ENCODE measurements at regions of chr10 and their contacts with region 1.

Region 1: DNA sequence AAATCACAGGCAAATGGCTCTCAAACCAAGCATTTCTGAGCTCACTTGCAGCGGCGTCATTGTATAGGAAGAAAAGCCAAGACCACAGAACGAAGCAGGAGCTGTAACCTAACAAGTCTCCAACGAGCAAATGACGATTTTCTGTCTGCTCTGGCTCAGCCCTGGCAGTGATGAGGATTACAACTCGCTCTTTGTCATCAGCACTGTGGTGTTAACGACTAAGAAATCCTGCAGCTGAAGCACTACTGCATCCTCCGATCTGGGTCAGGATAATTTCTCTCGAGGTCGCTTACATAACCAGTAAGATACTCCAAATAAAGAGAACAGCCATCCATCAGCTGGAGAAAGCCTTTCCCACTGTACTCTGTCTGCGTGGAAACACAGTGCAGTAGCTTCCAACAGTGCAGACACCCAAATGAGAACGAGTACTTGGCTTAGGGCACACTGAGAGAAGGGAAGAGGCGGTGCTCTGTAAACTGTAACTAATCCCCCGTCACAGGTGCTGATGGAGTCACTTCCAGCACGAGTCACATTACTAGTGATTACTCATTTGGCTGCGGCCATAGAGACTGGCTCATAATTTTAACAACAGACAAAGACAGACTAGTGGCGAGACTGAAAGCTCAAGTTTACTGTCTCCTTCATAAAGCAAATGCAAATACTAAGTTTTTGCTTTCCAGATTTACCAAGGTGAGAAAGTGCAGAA is 135.8 kb downstream of the NRBF2 start:
- DNase-seq: peak; percentile 86
- H3K4me3 Mint-ChIP-seq: peak overlapping the region; percentile 93
- H3K27ac Mint-ChIP-seq: peak overlapping the region; percentile 99
- H3K4me1 Mint-ChIP-seq: peaks cover 21% of the 10 kb centered on the region
- H3K27me3 Mint-ChIP-seq: no peaks in the 10 kb centered on the region

Region 2: GRCh38 chr10:63120554-63120953 is 148.4 kb before region 1 on chr10:
- CTCF ChIA-PET with region 1: no interaction called
- POLR2A ChIA-PET with region 1: no interaction called
- DNase-seq: no peak
- H3K4me3 Mint-ChIP-seq: no peak overlapping the region
- H3K27ac Mint-ChIP-seq: no peak overlapping the region
- H3K4me1 Mint-ChIP-seq: no peaks in the 10 kb centered on the region
- H3K27me3 Mint-ChIP-seq: peaks cover 3% of the 10 kb centered on the region

Region 3: GRCh38 chr10:63173468-63174232 is 95.3 kb before region 1 on chr10:
- CTCF ChIA-PET with region 1: no interaction called
- POLR2A ChIA-PET with region 1: interaction called, 12 read pairs
- DNase-seq: no peak
- H3K4me3 Mint-ChIP-seq: peak overlapping the region; percentile 5
- H3K27ac Mint-ChIP-seq: peak overlapping the region; percentile 86
- H3K4me1 Mint-ChIP-seq: peaks cover 63% of the 10 kb centered on the region
- H3K27me3 Mint-ChIP-seq: no peaks in the 10 kb centered on the region

Region 4: DNA sequence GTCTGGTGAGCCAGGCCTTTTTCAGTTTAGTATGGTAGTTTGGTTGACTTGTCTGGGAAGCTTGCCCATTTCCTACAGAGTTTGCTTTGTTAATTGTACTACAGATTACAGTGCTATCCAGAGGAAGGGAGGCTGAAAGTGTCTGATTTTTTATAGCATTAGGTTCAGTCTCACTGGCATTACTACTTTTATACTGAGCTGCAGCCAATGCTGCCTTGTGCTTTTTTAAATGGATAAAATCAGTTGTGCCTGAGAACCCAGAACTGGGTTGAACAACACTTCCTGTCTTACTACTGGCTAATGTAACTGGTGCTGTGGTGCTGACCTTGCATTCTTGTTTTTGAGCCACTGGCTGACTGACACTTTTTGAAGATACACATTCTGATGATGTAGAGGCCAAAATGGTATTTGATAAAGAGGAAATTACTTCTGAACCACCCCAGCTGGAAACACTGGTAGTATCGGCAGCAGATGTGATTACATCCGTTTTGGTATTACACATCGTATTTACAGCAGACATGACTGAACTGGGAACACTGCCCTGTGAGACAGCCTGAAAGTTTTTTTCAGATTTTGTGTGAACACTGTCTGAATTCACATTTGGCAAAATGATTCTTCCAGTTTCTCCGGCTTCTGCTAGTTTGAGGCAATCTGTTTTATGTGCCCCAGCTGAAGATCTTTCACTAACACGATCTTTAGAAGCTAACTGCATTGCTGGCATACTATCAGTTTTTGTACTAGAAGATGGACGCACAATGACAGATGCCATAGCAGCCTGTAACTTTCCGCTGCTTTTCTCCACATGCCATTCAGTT is 61.7 kb before region 1 on chr10:
- CTCF ChIA-PET with region 1: interaction called, 3 read pairs
- POLR2A ChIA-PET with region 1: interaction called, 24 read pairs
- DNase-seq: peak; percentile 42
- H3K4me3 Mint-ChIP-seq: no peak overlapping the region
- H3K27ac Mint-ChIP-seq: peak overlapping the region; percentile 82
- H3K4me1 Mint-ChIP-seq: peaks cover 64% of the 10 kb centered on the region
- H3K27me3 Mint-ChIP-seq: no peaks in the 10 kb centered on the region

Region 5: DNA sequence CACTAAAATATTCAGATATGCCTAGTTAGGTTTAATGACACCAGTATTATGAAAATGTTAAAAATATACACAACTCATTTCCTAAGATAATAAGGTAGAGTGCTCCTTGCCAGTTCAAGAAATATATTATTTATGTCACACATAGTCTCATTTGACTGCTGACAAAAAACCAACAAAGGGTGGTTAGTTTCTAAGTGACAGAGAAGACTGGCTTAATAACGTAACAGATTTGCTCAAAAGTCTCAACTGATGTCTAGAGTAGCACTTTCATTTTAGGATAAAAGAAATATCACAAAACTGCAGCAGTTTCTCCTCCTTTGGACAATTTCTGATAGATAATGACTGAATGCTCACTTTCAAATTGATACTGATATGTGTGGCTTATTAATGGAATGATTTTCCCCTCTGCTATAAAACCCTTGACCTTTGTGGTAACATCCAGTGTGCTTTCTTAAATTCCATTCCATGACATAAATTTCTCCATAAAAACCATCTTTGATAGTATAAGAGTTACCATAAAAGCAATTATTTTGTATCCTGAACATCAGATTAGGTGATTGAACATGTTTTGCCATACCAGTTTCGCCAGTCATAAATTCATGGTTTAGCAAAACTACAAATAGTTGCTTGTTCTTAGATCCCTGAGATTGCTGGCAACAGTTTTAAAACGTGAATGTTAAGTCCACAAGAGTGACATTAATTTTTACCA is 41.6 kb before region 1 on chr10:
- CTCF ChIA-PET with region 1: interaction called, 9 read pairs
- POLR2A ChIA-PET with region 1: interaction called, 27 read pairs
- DNase-seq: no peak
- H3K4me3 Mint-ChIP-seq: no peak overlapping the region
- H3K27ac Mint-ChIP-seq: peak overlapping the region; percentile 87
- H3K4me1 Mint-ChIP-seq: peaks cover 48% of the 10 kb centered on the region
- H3K27me3 Mint-ChIP-seq: no peaks in the 10 kb centered on the region

Region 6: GRCh38 chr10:63241841-63242281 is 27.1 kb before region 1 on chr10:
- CTCF ChIA-PET with region 1: interaction called, 4 read pairs
- POLR2A ChIA-PET with region 1: interaction called, 45 read pairs
- DNase-seq: no peak
- H3K4me3 Mint-ChIP-seq: peak overlapping the region; percentile 60
- H3K27ac Mint-ChIP-seq: peak overlapping the region; percentile 75
- H3K4me1 Mint-ChIP-seq: peaks cover 73% of the 10 kb centered on the region
- H3K27me3 Mint-ChIP-seq: no peaks in the 10 kb centered on the region

Region 7: DNA sequence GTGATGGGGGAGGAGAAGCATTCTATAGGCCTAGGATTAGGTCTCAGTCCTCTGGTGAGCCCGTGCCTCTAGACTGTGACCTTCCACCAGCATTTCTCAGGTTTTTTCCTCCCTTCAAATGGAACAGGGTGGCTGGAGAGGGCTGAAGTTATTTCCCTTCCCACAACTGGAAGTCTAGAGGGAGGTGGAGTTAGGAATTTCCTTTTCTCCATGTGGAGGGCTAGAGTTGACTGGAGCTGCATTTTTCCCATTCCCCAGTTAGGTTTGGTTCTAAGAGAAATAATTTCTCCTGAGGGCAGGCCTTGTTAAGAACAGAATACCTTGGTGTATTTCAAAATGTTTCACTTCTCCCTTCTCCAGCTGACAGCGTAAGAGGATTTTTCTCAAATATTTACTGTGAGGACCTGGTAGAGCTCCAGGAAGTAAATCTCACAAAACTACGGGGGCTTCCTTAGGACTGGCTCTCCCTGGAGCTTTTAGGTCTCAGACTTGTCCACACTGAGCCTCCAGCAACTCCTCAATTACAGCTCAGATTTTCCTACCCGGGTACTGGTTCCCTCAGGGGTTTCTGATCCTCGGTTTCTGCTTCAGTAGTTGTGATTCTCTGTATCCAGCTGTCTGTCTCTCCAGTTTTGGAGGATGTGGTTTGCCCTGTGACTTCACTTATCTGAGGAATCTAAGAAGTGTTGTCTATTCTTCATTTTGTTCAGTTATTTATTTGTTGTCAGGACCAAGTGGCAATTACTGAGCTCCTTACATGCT is 246.2 kb after region 1 on chr10:
- CTCF ChIA-PET with region 1: interaction called, 3 read pairs
- POLR2A ChIA-PET with region 1: interaction called, 58 read pairs
- DNase-seq: peak; percentile 34
- H3K4me3 Mint-ChIP-seq: peak overlapping the region; percentile 1
- H3K27ac Mint-ChIP-seq: peak overlapping the region; percentile 9
- H3K4me1 Mint-ChIP-seq: peaks cover 60% of the 10 kb centered on the region
- H3K27me3 Mint-ChIP-seq: no peaks in the 10 kb centered on the region

Region 8: GRCh38 chr10:63629363-63630084 is 360.6 kb after region 1 on chr10:
- CTCF ChIA-PET with region 1: interaction called, 14 read pairs
- POLR2A ChIA-PET with region 1: interaction called, 38 read pairs
- DNase-seq: peak; percentile 83
- H3K4me3 Mint-ChIP-seq: peak overlapping the region; percentile 83
- H3K27ac Mint-ChIP-seq: peak overlapping the region; percentile 81
- H3K4me1 Mint-ChIP-seq: peaks cover 44% of the 10 kb centered on the region
- H3K27me3 Mint-ChIP-seq: peaks cover 7% of the 10 kb centered on the region

Measured in activated CD4-positive, alpha-beta memory T cell treated with anti-CD3 and anti-CD28 coated beads, Interleukin-2, amount 10 ng/mL, durations not matched to agents 7 days and 5 days (primary cell).